AG04450 (cell line): ENCODE measurements at regions of chr15 and their contacts with region 1.

Region 1: DNA sequence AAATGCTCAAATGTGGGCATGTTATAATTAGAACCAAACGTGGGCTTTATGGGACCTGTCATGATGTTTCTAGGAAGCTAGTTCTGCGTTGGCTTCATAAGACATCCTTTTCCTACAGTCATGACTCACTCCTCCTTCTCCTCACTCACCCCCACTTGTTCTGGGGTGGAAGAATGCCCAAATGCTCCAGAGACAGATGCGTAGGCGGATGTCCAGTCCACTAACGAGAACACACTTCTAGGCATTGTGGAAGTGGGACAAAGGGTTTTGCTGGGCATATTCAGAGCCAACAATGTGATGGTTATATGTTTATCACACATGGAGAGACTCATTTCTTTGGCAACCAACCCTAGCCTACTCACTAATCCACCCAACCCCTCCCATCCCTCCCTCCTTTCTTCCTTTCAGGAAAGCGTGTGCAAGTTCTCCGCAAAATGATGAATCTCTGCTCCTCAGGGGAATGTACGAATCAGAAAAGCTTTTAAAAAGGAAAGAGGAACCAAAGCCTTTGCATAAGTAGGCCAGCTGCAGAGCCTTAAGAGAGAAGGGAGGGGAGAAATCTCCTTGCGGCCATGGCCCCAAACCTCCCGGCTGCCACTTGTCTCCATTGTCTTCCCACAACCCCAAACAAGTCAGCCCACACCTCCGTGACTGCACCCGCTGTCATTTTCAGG is 123.0 kb upstream of the SPRED1 start:
- DNase-seq: peak; percentile 98
- H3K4me3 ChIP-seq: peak overlapping the region; percentile 52
- H3K27ac ChIP-seq: peak overlapping the region; percentile 89
- H3K27me3 ChIP-seq: no peaks in the 10 kb centered on the region
- CTCF ChIP-seq: no peak

Region 2: DNA sequence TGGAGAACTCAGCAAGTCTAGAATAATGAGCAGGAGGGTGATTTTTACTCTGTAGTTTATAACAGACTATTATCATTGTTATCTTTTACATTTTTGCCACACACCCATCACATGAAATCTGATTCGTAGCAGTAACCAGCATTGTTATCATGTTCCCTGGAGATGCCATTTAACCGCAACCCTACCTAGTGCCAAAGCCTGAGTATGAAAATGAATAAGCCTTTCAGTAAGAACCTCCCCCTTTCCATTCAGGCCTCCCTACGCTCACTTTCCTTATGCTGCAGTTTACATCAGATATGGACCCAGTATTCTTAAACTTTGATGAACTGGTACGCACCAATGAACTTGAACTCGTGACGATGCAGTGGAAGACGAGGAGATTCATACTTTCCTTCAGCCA is 35.7 kb before region 1 on chr15:
- CTCF ChIA-PET with region 1: no interaction called
- POLR2A ChIA-PET with region 1: no interaction called
- DNase-seq: no peak
- H3K4me3 ChIP-seq: no peak overlapping the region
- H3K27ac ChIP-seq: no peak overlapping the region
- H3K27me3 ChIP-seq: no peaks in the 10 kb centered on the region
- CTCF ChIP-seq: no peak

Region 3: DNA sequence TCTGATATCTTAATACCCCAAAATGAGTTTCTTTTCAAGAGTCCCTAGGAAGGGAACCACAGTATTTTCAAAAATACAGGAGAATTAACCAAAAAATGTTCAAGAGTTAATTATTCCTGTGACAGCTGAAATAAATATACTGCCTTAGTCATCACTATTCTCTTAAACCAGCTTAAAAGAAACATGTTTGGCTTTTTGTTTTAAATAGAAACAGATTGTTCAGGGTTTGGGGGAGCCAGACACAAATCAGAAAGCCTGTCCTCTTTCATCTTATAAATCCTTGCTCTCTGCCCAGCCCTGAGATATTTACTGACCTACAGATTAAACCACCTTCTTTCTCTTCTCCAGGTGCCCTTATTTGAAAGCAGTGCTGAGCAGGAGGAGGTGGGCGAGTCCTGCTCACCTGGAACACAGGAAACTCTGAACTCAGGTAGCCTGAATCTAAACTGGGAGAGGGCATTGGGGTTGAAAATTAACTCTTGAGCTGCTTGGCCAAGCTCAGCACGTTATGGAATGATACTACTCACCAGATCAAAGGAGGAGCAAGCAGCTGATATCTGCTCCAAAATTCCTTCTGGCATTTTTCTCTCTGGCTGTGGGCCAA is 38.9 kb after region 1 on chr15:
- CTCF ChIA-PET with region 1: no interaction called
- POLR2A ChIA-PET with region 1: interaction called, 11 read pairs
- DNase-seq: no peak
- H3K4me3 ChIP-seq: no peak overlapping the region
- H3K27ac ChIP-seq: no peak overlapping the region
- H3K27me3 ChIP-seq: peaks cover 11% of the 10 kb centered on the region
- CTCF ChIP-seq: no peak

Region 4: DNA sequence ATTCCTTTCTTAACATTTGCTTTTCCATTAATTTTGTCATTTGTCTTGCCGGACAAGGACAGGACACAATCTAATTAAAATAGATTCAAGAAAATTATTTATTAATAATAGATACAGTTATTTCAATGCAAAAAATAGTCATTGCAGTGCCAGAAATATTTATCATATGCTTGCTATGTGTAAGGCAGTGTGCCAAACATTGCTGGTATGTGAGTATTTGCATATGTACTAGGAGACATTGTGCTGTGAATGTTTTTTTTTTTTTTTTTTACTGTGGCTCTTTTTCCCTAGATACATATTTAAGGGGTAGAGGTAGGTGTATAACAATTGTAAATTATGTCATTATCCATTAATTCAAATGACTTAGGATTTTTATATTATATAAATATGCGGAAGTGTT is 146.3 kb after region 1 on chr15:
- CTCF ChIA-PET with region 1: no interaction called
- POLR2A ChIA-PET with region 1: no interaction called
- DNase-seq: no peak
- H3K4me3 ChIP-seq: no peak overlapping the region
- H3K27ac ChIP-seq: no peak overlapping the region
- H3K27me3 ChIP-seq: no peaks in the 10 kb centered on the region
- CTCF ChIP-seq: no peak